HepG2 (cell line): ENCODE measurements at regions of chr2 and their contacts with region 1.

Region 1: DNA sequence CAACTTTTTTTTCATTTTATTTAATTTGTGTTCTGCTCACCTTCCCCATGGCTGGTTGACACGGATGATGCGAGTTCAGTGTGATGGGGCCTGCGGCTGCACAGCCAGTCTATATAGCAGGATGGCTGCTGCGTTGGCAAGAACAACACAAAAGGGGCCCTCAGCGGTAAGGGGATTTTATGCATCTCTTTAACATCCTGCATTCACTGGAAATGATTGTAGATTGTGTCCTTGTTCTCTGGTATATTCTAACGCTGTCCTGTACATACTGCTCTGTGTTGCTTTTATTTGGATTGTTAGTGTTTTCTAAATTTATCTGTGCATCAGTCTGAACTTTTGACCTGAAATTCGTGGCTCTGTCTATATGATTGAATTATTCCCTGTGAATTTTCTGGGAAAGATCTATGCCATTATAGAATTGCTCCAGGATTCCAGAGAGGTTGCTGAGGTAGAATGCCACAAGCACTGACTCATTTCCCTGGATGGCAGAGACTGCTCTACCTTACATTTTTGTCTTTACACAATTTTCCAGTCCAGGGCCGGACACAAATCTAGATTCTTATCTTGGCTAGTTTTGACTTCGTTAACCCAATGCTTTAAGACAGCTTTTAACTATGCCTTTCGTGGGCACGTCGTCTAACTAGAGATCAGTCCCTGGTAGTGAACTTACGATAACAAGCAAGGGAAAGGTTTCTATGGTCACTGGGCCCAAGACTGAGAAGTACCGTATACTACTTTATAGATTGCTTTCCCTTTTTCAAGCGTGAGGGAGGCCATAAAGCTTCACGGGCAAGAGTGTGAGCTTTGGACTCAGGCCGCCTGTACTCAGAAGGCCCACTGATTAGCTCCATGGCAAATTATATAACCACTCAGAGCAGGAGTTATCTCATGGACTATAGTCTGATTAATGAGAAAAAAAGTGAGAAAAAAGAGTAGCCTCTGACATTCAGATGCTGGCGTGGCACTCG is at the start of gene CRYGC:
- DNase-seq: peak; percentile 84
- ATAC-seq: peak; percentile 94
- H3K4me3 ChIP-seq: peak within 1 kb of the TSS; percentile 46 to 51 (median 46); a peak in 5 of 6 replicates
- H3K27ac ChIP-seq: peak within 1 kb of the TSS; percentile 71
- H3K4me1 ChIP-seq: peaks cover 33% of the 10 kb centered on the region
- H3K27me3 ChIP-seq: no peaks in the 10 kb centered on the region
- CTCF ChIP-seq: no peak
- EP300 ChIP-seq: peak in 1 of 2 experiments; percentile 34; a peak in 1 of 4 replicates
- POLR2A ChIP-seq: no peak
- RAD21 ChIP-seq: no peak
- total RNA-seq, gene CRYGC: 0.27 TPM in 1 of 2 replicates, not detected in the other

Region 2: GRCh38 chr2:207879536-207879935 is 250.5 kb before region 1 on chr2:
- CTCF ChIA-PET with region 1: no interaction called
- POLR2A ChIA-PET with region 1: no interaction called
- in situ Hi-C with region 1: no loop called
- intact Hi-C with region 1: loop called (anchors 1 kb)
- DNase-seq: peak; percentile 80
- ATAC-seq: peak; percentile 95
- H3K4me3 ChIP-seq: no peak overlapping the region
- H3K27ac ChIP-seq: peak overlapping the region; percentile 25
- H3K4me1 ChIP-seq: peaks cover 52% of the 10 kb centered on the region
- H3K27me3 ChIP-seq: no peaks in the 10 kb centered on the region
- CTCF ChIP-seq: peak; percentile 52
- EP300 ChIP-seq: 0 out of 4 replicates have a peak, but pooled peaks of 1 of the 2 experiments have one; percentile 18
- POLR2A ChIP-seq: no peak
- RAD21 ChIP-seq: no peak

Region 3: DNA sequence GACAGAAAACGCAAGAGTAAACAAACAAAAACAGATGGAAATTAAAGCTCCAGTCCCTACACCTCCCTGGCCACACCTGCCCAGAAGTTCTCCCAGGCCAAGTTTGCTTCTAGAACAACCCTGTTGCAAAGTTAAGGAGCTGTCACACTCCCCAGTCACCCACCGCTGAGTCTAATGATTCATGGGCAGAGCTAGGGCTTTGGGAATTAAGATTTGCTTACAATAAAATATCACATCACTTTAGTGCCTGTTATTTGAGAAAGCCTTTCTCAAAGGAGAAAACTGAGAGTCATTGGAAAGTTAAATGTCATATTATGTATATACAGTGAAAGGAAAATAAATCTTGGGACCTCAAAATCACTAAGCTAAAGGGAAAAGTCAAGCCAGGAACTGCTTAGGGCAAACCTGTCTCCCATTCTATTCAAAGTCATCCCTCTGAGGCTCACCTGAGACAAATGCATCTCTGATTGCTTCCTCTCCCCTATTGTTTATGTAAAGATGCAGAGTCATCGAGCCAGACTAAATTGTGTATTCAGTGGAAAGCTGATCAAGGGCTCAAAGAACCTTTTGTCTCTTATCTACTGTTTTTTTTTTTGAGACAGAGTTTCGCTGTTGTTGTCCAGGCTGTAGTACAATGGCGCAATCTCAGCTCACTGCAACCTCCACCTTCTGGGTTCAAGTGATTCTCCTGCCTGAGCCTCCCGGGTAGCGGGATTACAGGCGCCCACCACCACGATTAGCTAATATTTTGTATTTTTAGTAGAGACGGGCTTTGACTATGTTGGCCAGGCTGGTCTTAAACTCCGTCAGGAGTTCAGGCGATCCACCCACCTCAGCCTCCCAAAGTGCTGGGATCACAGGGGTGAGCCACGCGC is 13.1 kb after region 1 on chr2:
- CTCF ChIA-PET with region 1: no interaction called
- POLR2A ChIA-PET with region 1: interaction called, 8 read pairs
- in situ Hi-C with region 1: no loop called
- intact Hi-C with region 1: loop called (anchors 1 kb)
- DNase-seq: peak; percentile 93
- ATAC-seq: peak; percentile 79
- H3K4me3 ChIP-seq: no peak overlapping the region
- H3K27ac ChIP-seq: no peak overlapping the region
- H3K4me1 ChIP-seq: peaks cover 21% of the 10 kb centered on the region
- H3K27me3 ChIP-seq: peaks cover 0 to 5% of the 10 kb centered on the region in 2 experiments; a peak in 1 of 5 replicates
- CTCF ChIP-seq: no peak
- EP300 ChIP-seq: peak in 1 of 2 experiments; percentile 48; a peak in 1 of 4 replicates
- POLR2A ChIP-seq: no peak
- RAD21 ChIP-seq: no peak

Region 4: DNA sequence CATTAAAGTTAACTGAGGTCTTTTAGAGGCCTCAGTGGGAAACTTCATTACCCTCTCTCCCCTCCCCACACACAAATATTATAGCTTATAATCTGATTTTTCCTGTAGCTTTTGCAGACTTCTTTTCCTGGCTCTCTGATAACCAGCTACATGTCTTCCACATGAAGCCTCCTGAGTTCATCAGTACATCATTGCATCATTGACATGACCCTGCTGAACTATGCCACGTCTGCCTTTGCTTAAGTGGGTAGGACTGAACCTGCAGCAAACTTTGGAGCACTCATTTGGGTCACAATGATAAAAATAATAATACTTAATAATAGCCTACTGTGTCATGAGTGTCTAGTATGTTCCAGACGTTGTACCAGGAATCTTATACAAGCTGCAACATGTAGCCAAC is 26.4 kb after region 1 on chr2:
- CTCF ChIA-PET with region 1: no interaction called
- POLR2A ChIA-PET with region 1: no interaction called
- in situ Hi-C with region 1: no loop called
- intact Hi-C with region 1: no loop called
- DNase-seq: no peak
- ATAC-seq: no peak
- H3K4me3 ChIP-seq: no peak overlapping the region
- H3K27ac ChIP-seq: no peak overlapping the region
- H3K4me1 ChIP-seq: no peaks in the 10 kb centered on the region
- H3K27me3 ChIP-seq: 0 out of 5 replicates have a peak, but pooled peaks cover 0 to 10% of the 10 kb centered on the region in 2 experiments
- CTCF ChIP-seq: no peak
- EP300 ChIP-seq: no peak
- POLR2A ChIP-seq: no peak
- RAD21 ChIP-seq: no peak